HCT116 (cell line): ENCODE measurements at regions of chr10 and their contacts with region 1.

Region 1: DNA sequence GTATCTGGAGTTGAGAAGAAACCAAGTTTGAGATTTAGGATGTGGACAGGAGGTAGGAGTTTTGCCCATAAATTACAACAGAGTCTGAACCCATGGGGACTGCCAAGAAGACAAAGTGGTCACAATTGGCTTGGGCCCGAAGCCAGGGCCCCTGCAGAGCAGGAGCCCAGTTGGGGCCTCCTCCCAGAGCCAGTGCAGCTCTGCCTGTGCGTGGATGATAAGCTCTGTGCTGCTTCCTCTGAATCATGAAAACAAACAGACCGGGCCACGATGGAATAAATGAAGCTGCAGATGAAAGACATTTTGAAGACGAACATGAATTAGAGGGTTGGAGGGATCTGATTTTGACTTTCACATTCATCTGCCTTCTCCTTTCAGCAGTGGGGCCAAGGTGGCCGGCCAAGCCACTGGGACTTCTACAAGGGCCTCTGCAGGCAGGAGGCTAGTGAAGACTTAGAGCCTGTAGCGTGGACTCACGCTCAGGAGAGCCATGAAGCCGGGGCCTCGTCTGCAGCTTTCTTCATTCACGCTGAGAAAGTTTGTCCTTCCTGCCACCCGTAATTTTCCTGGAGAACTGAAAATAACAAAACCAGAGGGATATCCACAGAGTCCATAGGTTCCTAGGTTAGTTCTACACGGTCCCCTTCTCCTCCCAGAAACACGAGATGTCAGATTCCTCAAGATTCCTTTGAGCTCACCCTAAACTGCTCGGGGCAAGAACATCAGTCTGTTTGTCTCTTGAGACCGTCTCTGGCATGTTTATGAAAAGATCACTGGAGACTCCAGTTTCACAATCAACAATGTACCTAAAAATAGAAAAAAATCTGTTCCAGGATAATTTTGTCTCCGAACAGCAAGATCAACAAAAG is 156.7 kb upstream of the LYZL1 start:
- DNase-seq: no peak
- ATAC-seq: no peak
- H3K4me3 ChIP-seq: no peak overlapping the region
- H3K27ac ChIP-seq: no peak overlapping the region
- H3K4me1 ChIP-seq: no peaks in the 10 kb centered on the region; a peak in 1 of 4 replicates
- H3K27me3 ChIP-seq: peaks cover 1% of the 10 kb centered on the region
- CTCF ChIP-seq: no peak
- POLR2A ChIP-seq: no peak
- RAD21 ChIP-seq: no peak

Region 2: GRCh38 chr10:28432210-28432676 is 699.9 kb before region 1 on chr10:
- CTCF ChIA-PET with region 1: no interaction called
- POLR2A ChIA-PET with region 1: no interaction called
- RAD21 ChIA-PET with region 1: no interaction called
- intact Hi-C with region 1: loop called (anchors 5 kb)
- DNase-seq: peak; percentile 70
- ATAC-seq: peak; percentile 93
- H3K4me3 ChIP-seq: peak overlapping the region in 1 of 2 experiments; percentile 34; a peak in 2 of 4 replicates
- H3K27ac ChIP-seq: no peak overlapping the region
- H3K4me1 ChIP-seq: peaks cover 0 to 7% of the 10 kb centered on the region in 2 experiments; a peak in 2 of 4 replicates
- H3K27me3 ChIP-seq: no peaks in the 10 kb centered on the region
- CTCF ChIP-seq: peak; percentile 67 to 83 (median 81)
- POLR2A ChIP-seq: no peak
- RAD21 ChIP-seq: peak; percentile 80

Region 3: DNA sequence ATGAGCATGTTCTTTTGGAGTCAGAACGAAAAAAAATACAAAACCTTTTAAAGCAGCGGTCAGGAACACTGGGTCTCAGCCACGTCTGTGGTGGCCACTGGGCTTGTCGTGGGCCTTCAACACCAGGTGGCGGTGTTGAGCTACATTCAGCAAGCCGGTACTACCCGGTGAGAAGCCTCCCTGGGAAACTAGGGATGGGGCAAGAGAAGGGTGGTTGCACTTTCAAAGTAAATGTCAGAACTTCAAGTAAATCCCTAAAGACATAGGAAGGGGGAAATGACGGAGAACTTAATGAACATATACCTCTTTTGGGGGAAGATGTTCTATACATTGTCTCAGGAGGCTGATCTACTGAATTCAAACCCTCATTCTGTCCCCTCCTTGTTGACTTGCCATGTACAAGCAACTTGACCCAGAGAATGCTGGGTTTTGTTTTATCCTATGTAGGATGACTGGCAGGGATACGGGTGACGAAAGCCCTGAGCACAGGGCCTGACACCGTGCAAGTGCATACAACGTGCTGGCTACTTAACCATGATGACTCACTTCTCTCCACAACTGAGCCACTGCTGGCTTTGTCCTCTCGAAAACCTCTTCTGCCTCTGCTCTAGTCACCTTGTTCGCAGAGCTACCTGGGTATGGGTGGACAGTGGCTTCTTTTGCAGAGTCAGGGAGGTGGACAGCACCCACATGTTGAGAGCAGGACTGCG is 503.8 kb before region 1 on chr10:
- CTCF ChIA-PET with region 1: interaction called, 3 read pairs
- POLR2A ChIA-PET with region 1: no interaction called
- RAD21 ChIA-PET with region 1: no interaction called
- intact Hi-C with region 1: loop called (anchors 1 kb)
- DNase-seq: peak; percentile 63
- ATAC-seq: peak; percentile 96
- H3K4me3 ChIP-seq: no peak overlapping the region
- H3K27ac ChIP-seq: no peak overlapping the region
- H3K4me1 ChIP-seq: peaks cover 3 to 7% of the 10 kb centered on the region in 2 experiments; a peak in 2 of 4 replicates
- H3K27me3 ChIP-seq: no peaks in the 10 kb centered on the region
- CTCF ChIP-seq: peak; percentile 72 to 96 (median 93)
- POLR2A ChIP-seq: no peak
- RAD21 ChIP-seq: peak; percentile 93

Region 4: GRCh38 chr10:28676968-28677887 is 455.0 kb before region 1 on chr10 and contains the start of gene BAMBI:
- CTCF ChIA-PET with region 1: interaction called, 4 read pairs
- POLR2A ChIA-PET with region 1: no interaction called
- RAD21 ChIA-PET with region 1: no interaction called
- intact Hi-C with region 1: loop called (anchors 5 kb)
- DNase-seq: peak; percentile 77
- ATAC-seq: peak; percentile 93
- H3K4me3 ChIP-seq: peak within 1 kb of the TSS; percentile 57 to 77
- H3K27ac ChIP-seq: peak within 1 kb of the TSS; percentile 68; the same call in 1 of the 2 replicates
- H3K4me1 ChIP-seq: peaks cover 6 to 26% of the 10 kb centered on the region in 2 experiments
- H3K27me3 ChIP-seq: peaks cover 6% of the 10 kb centered on the region; the same call in 1 of the 2 replicates
- CTCF ChIP-seq: peak; percentile 32 to 52 (median 38); a peak in 4 of 6 replicates
- POLR2A ChIP-seq: no peak
- RAD21 ChIP-seq: peak; percentile 56
- total RNA-seq, gene BAMBI: 6.2 TPM

Region 5: GRCh38 chr10:28991326-28992270 is 140.6 kb before region 1 on chr10:
- CTCF ChIA-PET with region 1: interaction called, 5 read pairs
- POLR2A ChIA-PET with region 1: no interaction called
- RAD21 ChIA-PET with region 1: no interaction called
- intact Hi-C with region 1: loop called (anchors 1 kb)
- DNase-seq: peak; percentile 76
- ATAC-seq: peak; percentile 88
- H3K4me3 ChIP-seq: no peak overlapping the region
- H3K27ac ChIP-seq: peak overlapping the region; percentile 23; the same call in 1 of the 2 replicates
- H3K4me1 ChIP-seq: peaks cover 7 to 32% of the 10 kb centered on the region in 2 experiments
- H3K27me3 ChIP-seq: no peaks in the 10 kb centered on the region
- CTCF ChIP-seq: peak; percentile 88 to 94 (median 93)
- POLR2A ChIP-seq: no peak
- RAD21 ChIP-seq: peak; percentile 97